Naive thymus-derived CD4-positive, alpha-beta T cell (primary cell): ENCODE measurements at regions of chr19 and their contacts with region 1.

Region 1: GRCh38 chr19:55117636-55118391 is at the start of gene PPP1R12C:
- DNase-seq: peak; percentile 88 to 97 (median 91)
- ATAC-seq: peak; percentile 95
- H3K4me3 ChIP-seq: peak within 1 kb of the TSS; percentile 97
- H3K4me3 Mint-ChIP-seq: peak within 1 kb of the TSS; percentile 96 to 100 (median 98)
- H3K27ac ChIP-seq: peak within 1 kb of the TSS; percentile 74
- H3K27ac Mint-ChIP-seq: peak within 1 kb of the TSS; percentile 91 to 96 (median 95)
- H3K4me1 ChIP-seq: peaks cover 12 to 19% of the 10 kb centered on the region in 2 donors
- H3K4me1 Mint-ChIP-seq: peaks cover 14 to 47% (median 36%) of the 10 kb centered on the region in 7 donors
- H3K27me3 ChIP-seq: no peaks in the 10 kb centered on the region
- H3K27me3 Mint-ChIP-seq: peaks cover 0 to 13% (median under 1%) of the 10 kb centered on the region in 5 donors
- total RNA-seq, gene PPP1R12C: 107 to 180 (median 144) TPM

Region 2: GRCh38 chr19:55005684-55006488 is 111.9 kb before region 1 on chr19:
- CTCF ChIA-PET with region 1: no interaction called
- POLR2A ChIA-PET with region 1: interaction called, 3 read pairs
- intact Hi-C with region 1: loop called (anchors 1 to 2 kb)
- DNase-seq: peak; percentile 26 to 92 (median 88)
- ATAC-seq: peak; percentile 92
- H3K4me3 ChIP-seq: peak overlapping the region; percentile 51
- H3K4me3 Mint-ChIP-seq: peak overlapping the region; percentile 75 to 92 (median 84)
- H3K27ac ChIP-seq: peak overlapping the region; percentile 75
- H3K27ac Mint-ChIP-seq: peak overlapping the region; percentile 86 to 98 (median 92)
- H3K4me1 ChIP-seq: peaks cover 0 to 8% of the 10 kb centered on the region in 2 donors
- H3K4me1 Mint-ChIP-seq: peaks cover 26 to 47% (median 40%) of the 10 kb centered on the region in 7 donors
- H3K27me3 ChIP-seq: peaks cover 0 to 3% of the 10 kb centered on the region in 2 donors
- H3K27me3 Mint-ChIP-seq: peaks cover 3 to 41% (median 35%) of the 10 kb centered on the region in 5 donors

Region 3: DNA sequence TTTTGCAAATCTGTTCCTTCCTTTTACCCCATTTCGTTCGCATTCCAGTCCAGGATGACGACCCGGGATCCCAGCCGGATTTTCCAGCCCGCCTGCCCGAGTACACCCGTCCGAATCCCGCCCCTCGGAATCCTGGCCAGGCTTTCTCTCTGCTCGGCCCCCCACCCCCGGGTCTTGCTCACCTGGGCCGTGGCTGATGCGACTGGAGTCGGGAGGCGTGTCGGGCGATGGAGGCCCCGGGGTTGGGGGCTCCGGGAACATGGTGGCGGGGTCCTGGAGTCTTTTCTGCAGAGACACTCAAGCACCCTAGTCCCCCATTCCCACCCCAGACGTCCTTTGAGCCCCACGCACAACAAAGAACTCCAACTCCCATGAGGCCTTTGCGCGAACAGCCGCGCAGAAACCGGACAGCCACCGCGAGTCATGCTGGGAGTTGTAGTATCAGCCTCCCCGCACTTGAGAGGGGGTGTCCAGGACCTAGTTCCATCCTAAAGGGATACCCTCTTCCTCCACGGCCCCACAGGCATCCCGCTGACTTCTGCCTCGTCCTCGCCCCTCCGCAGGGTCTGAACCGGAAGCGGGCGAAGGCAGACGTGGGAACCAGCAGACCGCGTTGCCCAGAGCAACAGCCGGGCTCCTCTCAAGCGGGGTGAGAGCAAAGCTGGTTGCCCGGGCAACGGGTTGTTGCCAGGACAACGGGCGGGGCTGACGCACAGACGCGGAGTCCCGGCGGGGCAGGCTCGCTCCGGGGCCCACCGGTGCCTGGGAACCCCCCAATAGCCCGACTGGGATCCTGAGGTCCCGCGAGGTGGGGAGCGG is 61.2 kb after region 1 on chr19:
- CTCF ChIA-PET with region 1: no interaction called
- POLR2A ChIA-PET with region 1: no interaction called
- intact Hi-C with region 1: loop called in 1 of 2 experiments (anchors 2 kb)
- DNase-seq: peak; percentile 87 to 98 (median 92)
- ATAC-seq: peak; percentile 93
- H3K4me3 ChIP-seq: peak overlapping the region; percentile 64
- H3K4me3 Mint-ChIP-seq: peak overlapping the region; percentile 49 to 85 (median 82)
- H3K27ac ChIP-seq: peak overlapping the region; percentile 41
- H3K27ac Mint-ChIP-seq: peak overlapping the region; percentile 38 to 94 (median 86)
- H3K4me1 ChIP-seq: peaks cover 15 to 32% of the 10 kb centered on the region in 2 donors
- H3K4me1 Mint-ChIP-seq: peaks cover 9 to 36% (median 26%) of the 10 kb centered on the region in 7 donors
- H3K27me3 ChIP-seq: peaks cover 13 to 50% of the 10 kb centered on the region in 2 donors
- H3K27me3 Mint-ChIP-seq: peaks cover 63 to 79% (median 67%) of the 10 kb centered on the region in 5 donors

Region 4: DNA sequence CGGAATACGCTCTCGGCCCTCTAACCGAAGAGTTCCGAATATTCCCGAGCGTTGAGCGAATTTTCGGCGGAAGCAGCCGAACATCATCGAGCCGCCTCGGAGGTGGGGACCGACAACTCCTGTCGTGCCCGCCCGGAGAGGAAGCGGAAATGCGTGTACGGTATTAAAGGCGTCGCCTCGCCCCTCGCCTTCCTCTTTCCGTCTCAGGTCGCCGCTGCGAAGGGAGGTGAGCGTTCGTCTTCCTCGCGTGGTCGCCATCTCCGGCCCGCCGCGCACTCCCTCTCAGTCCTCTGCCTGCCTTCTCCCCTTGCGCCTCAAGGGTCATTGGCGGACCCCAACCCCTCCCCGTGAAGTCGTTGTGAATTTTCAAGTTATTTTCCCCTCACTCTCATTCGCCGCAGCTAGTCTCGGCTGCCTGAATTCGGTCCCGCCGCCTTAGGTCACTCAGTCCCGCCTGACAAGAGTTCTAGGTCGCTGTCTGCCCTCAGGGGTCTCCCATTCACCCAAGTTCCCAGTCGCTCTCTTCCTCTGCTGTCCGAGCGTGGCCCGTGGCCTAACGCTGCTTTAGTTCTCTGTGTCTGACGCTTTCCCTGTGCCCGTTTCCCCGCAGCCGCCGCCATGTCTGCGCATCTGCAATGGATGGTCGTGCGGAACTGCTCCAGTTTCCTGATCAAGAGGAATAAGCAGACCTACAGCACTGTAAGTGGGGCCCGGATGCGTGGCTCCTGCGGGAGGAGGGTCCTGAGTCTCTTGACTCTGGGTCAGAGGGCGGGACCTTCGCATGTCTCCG is 268.1 kb after region 1 on chr19 and contains the start of gene RPL28:
- CTCF ChIA-PET with region 1: no interaction called
- POLR2A ChIA-PET with region 1: interaction called, 4 read pairs
- intact Hi-C with region 1: loop called (anchors 1 kb)
- DNase-seq: peak; percentile 92 to 99 (median 99)
- ATAC-seq: peak; percentile 89
- H3K4me3 ChIP-seq: peak within 1 kb of the TSS; percentile 92
- H3K4me3 Mint-ChIP-seq: peak within 1 kb of the TSS; percentile 94 to 100 (median 100)
- H3K27ac ChIP-seq: peak within 1 kb of the TSS; percentile 91
- H3K27ac Mint-ChIP-seq: peak within 1 kb of the TSS; percentile 91 to 100 (median 99)
- H3K4me1 ChIP-seq: peaks cover 45 to 53% of the 10 kb centered on the region in 2 donors
- H3K4me1 Mint-ChIP-seq: peaks cover 41 to 79% (median 70%) of the 10 kb centered on the region in 7 donors
- H3K27me3 ChIP-seq: no peaks in the 10 kb centered on the region
- H3K27me3 Mint-ChIP-seq: peaks cover 0 to 3% (median 0%) of the 10 kb centered on the region in 5 donors
- total RNA-seq, gene RPL28: 2,549 to 3,799 (median 3,242) TPM

Region 5: DNA sequence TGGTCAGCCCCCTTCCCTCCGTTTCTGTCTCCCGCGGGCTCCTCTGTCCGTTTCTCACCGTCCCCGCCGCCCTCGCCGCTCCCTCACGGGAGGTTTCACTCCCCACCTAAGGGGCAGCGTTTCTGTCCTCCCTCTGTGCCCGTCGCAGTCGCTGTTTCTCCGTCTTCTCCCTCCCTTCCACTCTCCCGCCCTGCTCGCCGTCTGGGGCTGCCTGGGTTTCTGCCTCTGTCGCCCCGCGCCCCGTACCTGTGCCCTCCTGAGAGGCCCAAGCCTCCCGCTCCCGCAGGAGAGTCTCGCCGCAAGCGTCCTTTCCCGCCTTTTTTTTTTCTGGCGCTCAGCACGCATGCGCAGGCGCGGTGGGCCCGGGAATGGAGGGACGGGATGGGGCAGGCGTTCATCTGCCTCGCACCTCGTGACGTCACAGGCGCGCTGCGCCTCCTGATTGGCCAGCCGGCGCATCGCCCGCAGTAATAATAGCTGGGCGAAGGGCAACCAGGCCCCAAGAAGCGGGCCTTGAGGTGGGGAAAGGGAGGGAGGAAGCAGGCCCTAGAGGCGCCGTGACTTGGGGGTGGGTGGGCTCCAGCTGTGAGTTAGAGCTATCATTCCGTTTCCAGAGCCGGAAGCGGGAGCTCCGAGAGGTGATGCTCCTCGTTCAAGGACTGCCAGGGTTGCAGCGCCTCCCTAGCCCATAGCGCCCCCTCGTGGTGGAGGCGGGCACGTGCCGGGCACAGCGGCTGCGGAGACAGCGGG is 385.9 kb after region 1 on chr19:
- CTCF ChIA-PET with region 1: no interaction called
- POLR2A ChIA-PET with region 1: no interaction called
- intact Hi-C with region 1: loop called in 1 of 2 experiments (anchors 1 kb)
- DNase-seq: peak; percentile 81 to 98 (median 92)
- ATAC-seq: peak; percentile 98
- H3K4me3 ChIP-seq: peak overlapping the region; percentile 79
- H3K4me3 Mint-ChIP-seq: peak overlapping the region; percentile 78 to 89 (median 84)
- H3K27ac ChIP-seq: peak overlapping the region; percentile 46
- H3K27ac Mint-ChIP-seq: peak overlapping the region; percentile 59 to 96 (median 82)
- H3K4me1 ChIP-seq: peaks cover 4% of the 10 kb centered on the region in 2 donors
- H3K4me1 Mint-ChIP-seq: peaks cover 0 to 22% (median 10%) of the 10 kb centered on the region in 7 donors
- H3K27me3 ChIP-seq: no peaks in the 10 kb centered on the region
- H3K27me3 Mint-ChIP-seq: peaks cover 0 to 8% (median 6%) of the 10 kb centered on the region in 5 donors

Region 6: GRCh38 chr19:55653758-55654539 is 536.1 kb after region 1 on chr19:
- CTCF ChIA-PET with region 1: interaction called, 3 read pairs
- POLR2A ChIA-PET with region 1: no interaction called
- intact Hi-C with region 1: loop called (anchors 1 kb)
- DNase-seq: peak; percentile 95 to 100 (median 100)
- ATAC-seq: peak; percentile 83
- H3K4me3 ChIP-seq: peak overlapping the region; percentile 98
- H3K4me3 Mint-ChIP-seq: peak overlapping the region; percentile 83 to 99 (median 96)
- H3K27ac ChIP-seq: peak overlapping the region; percentile 99
- H3K27ac Mint-ChIP-seq: peak overlapping the region; percentile 95 to 100 (median 99)
- H3K4me1 ChIP-seq: peaks cover 30 to 36% of the 10 kb centered on the region in 2 donors
- H3K4me1 Mint-ChIP-seq: peaks cover 29 to 55% (median 39%) of the 10 kb centered on the region in 7 donors
- H3K27me3 ChIP-seq: no peaks in the 10 kb centered on the region
- H3K27me3 Mint-ChIP-seq: peaks cover 0 to 2% (median 0%) of the 10 kb centered on the region in 5 donors